ENCODE measurements at regions of chr1 and their contacts with region 1.

Region 1: DNA sequence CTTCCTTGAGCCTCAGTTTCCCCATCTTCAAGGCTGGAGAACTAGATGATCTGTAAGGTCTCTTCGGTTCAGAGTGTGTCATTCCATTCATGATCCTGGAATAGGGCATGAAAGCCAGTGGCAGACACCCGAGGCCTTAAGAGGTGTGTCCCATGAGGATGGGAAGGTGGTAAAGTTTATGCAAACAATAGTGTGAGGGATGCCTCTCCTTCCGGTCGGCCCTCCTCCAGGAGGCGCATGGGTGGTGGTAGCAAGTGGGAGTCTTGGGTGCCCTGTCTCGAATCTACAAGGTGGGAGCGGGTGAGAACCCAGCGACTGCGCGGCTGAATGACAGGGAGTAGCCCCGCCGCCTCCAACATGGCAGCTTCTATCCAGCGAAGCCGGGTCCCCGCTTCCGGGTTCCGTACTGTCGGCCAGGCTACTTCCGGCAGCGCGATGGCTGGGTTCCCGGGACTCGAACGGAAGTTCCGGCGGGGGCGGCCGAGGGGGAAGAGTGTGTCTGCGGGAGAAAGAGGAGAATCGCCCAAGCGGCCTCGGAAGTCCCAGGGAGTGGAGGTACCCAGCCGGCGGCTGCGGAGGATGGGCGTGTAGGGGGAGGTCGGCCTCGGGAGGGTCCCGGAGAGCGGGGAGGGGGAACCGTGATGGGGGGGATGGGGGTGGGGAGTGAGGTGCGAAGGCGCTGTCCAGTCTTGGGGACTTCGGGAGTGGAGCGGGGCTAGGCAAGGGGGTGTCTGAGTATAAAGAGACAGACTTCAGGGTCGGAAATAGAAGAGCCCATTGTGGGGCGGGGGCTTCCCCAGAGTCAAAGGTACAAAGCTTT is at the start of gene LYPLA2:
- DNase-seq: peak; percentile 81
- ATAC-seq: peak; percentile 90
- H3K4me3 Mint-ChIP-seq: peak within 1 kb of the TSS; percentile 99
- H3K27ac Mint-ChIP-seq: peak within 1 kb of the TSS; percentile 95
- H3K4me1 Mint-ChIP-seq: peaks cover 26% of the 10 kb centered on the region
- H3K27me3 Mint-ChIP-seq: no peaks in the 10 kb centered on the region
- CTCF ChIP-seq: no peak
- total RNA-seq, gene LYPLA2: 75.8 and 81.6 TPM in 2 replicates

Region 2: DNA sequence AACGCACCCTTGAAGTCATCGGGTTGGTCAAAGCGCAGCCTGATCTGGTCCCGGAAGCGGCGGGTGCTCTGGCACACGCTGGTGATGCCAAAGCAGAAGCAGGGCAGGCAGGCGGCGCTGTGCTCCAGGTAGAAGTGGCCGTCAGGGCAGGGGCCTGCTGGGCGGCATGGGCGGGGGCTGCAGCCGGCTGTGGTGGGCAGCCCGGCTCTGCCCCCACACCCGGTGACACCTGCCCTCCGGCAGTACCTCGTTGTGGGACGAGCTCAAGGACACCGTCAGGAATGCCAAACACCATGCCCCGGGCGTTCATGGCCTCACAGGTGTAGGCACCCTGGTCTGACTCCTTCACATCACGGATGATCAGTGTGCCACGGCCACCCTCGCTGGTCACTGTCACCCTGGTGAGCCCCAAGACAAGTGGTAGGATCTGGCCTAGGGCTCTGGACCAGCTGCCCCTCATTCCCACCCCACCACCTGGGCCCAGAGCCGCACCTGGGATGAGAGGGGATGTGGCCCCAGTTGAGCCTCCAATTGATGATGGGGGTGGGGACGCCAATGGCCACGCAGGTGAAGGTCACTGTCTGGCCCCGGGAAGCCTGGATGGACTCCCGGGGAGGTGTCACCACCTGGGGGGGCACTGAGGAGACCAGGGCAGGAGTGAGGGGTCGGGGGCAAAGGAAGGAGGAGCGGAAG is 1906.2 kb before region 1 on chr1:
- CTCF ChIA-PET with region 1: no interaction called
- POLR2A ChIA-PET with region 1: interaction called, 13 read pairs
- intact Hi-C with region 1: no loop called
- DNase-seq: no peak
- ATAC-seq: no peak
- H3K4me3 Mint-ChIP-seq: no peak overlapping the region
- H3K27ac Mint-ChIP-seq: no peak overlapping the region
- H3K4me1 Mint-ChIP-seq: no peaks in the 10 kb centered on the region
- H3K27me3 Mint-ChIP-seq: no peaks in the 10 kb centered on the region
- CTCF ChIP-seq: no peak

Region 3: GRCh38 chr1:23751050-23751814 is 39.7 kb before region 1 on chr1:
- CTCF ChIA-PET with region 1: no interaction called
- POLR2A ChIA-PET with region 1: no interaction called
- intact Hi-C with region 1: loop called (anchors 2 kb)
- DNase-seq: no peak
- ATAC-seq: peak; percentile 84
- H3K4me3 Mint-ChIP-seq: no peak overlapping the region
- H3K27ac Mint-ChIP-seq: peak overlapping the region; percentile 41
- H3K4me1 Mint-ChIP-seq: peaks cover 33% of the 10 kb centered on the region
- H3K27me3 Mint-ChIP-seq: no peaks in the 10 kb centered on the region
- CTCF ChIP-seq: peak; percentile 25

Region 4: GRCh38 chr1:23777979-23778814 is 12.7 kb before region 1 on chr1 and contains the start of gene PITHD1:
- CTCF ChIA-PET with region 1: interaction called, 3 read pairs
- POLR2A ChIA-PET with region 1: interaction called, 61 read pairs
- intact Hi-C with region 1: loop called (anchors 1 kb)
- DNase-seq: peak; percentile 83
- ATAC-seq: peak; percentile 86
- H3K4me3 Mint-ChIP-seq: peak within 1 kb of the TSS; percentile 91
- H3K27ac Mint-ChIP-seq: peak within 1 kb of the TSS; percentile 90
- H3K4me1 Mint-ChIP-seq: peaks cover 30% of the 10 kb centered on the region
- H3K27me3 Mint-ChIP-seq: no peaks in the 10 kb centered on the region
- CTCF ChIP-seq: no peak
- total RNA-seq, gene PITHD1: 58.7 and 63.3 TPM in 2 replicates

Measured in activated B cell treated with CpG ODN at 0.5 μM for 24 hours (primary cell).